BJ (cell line): ENCODE measurements at regions of chr2 and their contacts with region 1.

Region 1: GRCh38 chr2:100742277-100743254 is 77.4 kb upstream of the NPAS2 start:
- DNase-seq: peak; percentile 99
- H3K4me3 ChIP-seq: no peak overlapping the region
- H3K27me3 ChIP-seq: no peaks in the 10 kb centered on the region
- CTCF ChIP-seq: 0 out of 2 replicates have a peak, but pooled peaks have one; percentile 1

Region 2: GRCh38 chr2:100957996-100958653 is 215.6 kb after region 1 on chr2:
- CTCF ChIA-PET with region 1: no interaction called
- POLR2A ChIA-PET with region 1: interaction called, 16 read pairs
- DNase-seq: peak; percentile 99
- H3K4me3 ChIP-seq: no peak overlapping the region
- H3K27me3 ChIP-seq: no peaks in the 10 kb centered on the region
- CTCF ChIP-seq: no peak